Naive thymus-derived CD4-positive, alpha-beta T cell (primary cell): ENCODE measurements at regions of chr3 and their contacts with region 1.

Region 1: DNA sequence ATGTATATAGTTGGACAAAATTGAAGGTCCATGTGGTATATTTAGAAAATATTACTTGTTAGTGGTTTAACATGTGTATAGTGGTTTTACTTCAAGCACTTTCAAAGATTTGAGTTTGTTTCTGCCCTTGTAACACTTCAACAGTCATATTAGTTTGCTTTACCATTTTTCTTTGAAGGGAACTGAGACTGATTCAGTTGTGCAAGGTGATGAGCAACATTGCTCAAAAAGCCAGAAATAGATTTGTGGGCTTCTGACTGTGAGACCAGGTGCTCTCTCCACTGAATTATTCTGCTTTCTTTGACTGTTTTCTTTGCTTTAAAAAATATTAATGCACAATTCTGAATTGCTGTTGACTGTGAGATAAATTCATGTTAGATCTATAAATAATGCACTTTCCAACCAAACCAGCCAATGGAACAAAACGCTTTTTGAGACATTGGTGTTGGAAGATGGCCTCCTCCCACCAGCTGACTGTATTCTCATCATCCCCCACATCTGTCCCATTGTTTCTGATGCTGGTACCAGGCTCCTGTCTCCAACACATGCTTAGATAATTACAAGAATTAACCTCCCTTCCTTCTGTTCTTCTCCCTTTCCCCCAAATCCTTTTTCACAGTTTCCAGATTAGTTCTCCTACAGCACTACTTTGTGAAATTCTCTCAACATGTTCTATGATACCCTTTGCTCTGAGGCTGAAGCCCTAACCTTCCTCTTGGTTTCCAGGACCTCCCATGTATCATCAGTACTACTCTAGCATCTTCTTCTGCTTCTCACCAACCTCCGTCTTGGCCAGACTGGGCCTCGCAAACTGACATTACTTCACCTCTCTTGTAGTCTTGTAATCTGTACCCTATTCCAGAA is 27.9 kb downstream of the PLCL2 start:
- DNase-seq: no peak
- ATAC-seq: no peak
- H3K4me3 ChIP-seq: no peak overlapping the region
- H3K4me3 Mint-ChIP-seq: peak overlapping the region in 9 of 10 donors; percentile 4 to 74 (median 34)
- H3K27ac ChIP-seq: no peak overlapping the region
- H3K27ac Mint-ChIP-seq: peak overlapping the region in 5 of 9 donors; percentile 5 to 46 (median 13)
- H3K4me1 ChIP-seq: peaks cover 29 to 48% of the 10 kb centered on the region in 2 donors
- H3K4me1 Mint-ChIP-seq: peaks cover 57 to 95% (median 84%) of the 10 kb centered on the region in 7 donors
- H3K27me3 ChIP-seq: no peaks in the 10 kb centered on the region
- H3K27me3 Mint-ChIP-seq: no peaks in the 10 kb centered on the region

Region 2: GRCh38 chr3:16897254-16897926 is 15.2 kb before region 1 on chr3:
- CTCF ChIA-PET with region 1: no interaction called
- POLR2A ChIA-PET with region 1: interaction called, 9 read pairs
- intact Hi-C with region 1: loop called in 1 of 2 experiments (anchors 1 kb)
- DNase-seq: peak in 6 of 9 donors; percentile 31 to 66 (median 52)
- ATAC-seq: peak; percentile 65
- H3K4me3 ChIP-seq: no peak overlapping the region
- H3K4me3 Mint-ChIP-seq: peak overlapping the region; percentile 44 to 86 (median 67)
- H3K27ac ChIP-seq: no peak overlapping the region
- H3K27ac Mint-ChIP-seq: peak overlapping the region; percentile 25 to 96 (median 92)
- H3K4me1 ChIP-seq: peaks cover 58 to 79% of the 10 kb centered on the region in 2 donors
- H3K4me1 Mint-ChIP-seq: peaks cover 66 to 94% (median 89%) of the 10 kb centered on the region in 7 donors
- H3K27me3 ChIP-seq: no peaks in the 10 kb centered on the region
- H3K27me3 Mint-ChIP-seq: no peaks in the 10 kb centered on the region